ENCODE measurements at regions of chr20 and their contacts with region 1.

Region 1: GRCh38 chr20:10427060-10427692 is 6.8 kb downstream of the MKKS start:
- DNase-seq: peak; percentile 48
- H3K4me3 ChIP-seq: no peak overlapping the region
- H3K4me3 Mint-ChIP-seq: no peak overlapping the region
- H3K27ac Mint-ChIP-seq: no peak overlapping the region
- H3K4me1 ChIP-seq: peaks cover 17% of the 10 kb centered on the region
- H3K4me1 Mint-ChIP-seq: peaks cover 20% of the 10 kb centered on the region
- H3K27me3 ChIP-seq: no peaks in the 10 kb centered on the region
- H3K27me3 Mint-ChIP-seq: no peaks in the 10 kb centered on the region
- CTCF ChIP-seq: peak; percentile 71 to 84

Region 2: GRCh38 chr20:10090588-10091166 is 336.5 kb before region 1 on chr20:
- CTCF ChIA-PET with region 1: no interaction called
- POLR2A ChIA-PET with region 1: no interaction called
- intact Hi-C with region 1: loop called (anchors 5 kb)
- DNase-seq: peak; percentile 48 to 60
- H3K4me3 ChIP-seq: no peak overlapping the region
- H3K4me3 Mint-ChIP-seq: no peak overlapping the region
- H3K27ac Mint-ChIP-seq: no peak overlapping the region
- H3K4me1 ChIP-seq: no peaks in the 10 kb centered on the region
- H3K4me1 Mint-ChIP-seq: no peaks in the 10 kb centered on the region
- H3K27me3 ChIP-seq: no peaks in the 10 kb centered on the region
- H3K27me3 Mint-ChIP-seq: peaks cover 6% of the 10 kb centered on the region
- CTCF ChIP-seq: peak; percentile 70 to 86

Region 3: DNA sequence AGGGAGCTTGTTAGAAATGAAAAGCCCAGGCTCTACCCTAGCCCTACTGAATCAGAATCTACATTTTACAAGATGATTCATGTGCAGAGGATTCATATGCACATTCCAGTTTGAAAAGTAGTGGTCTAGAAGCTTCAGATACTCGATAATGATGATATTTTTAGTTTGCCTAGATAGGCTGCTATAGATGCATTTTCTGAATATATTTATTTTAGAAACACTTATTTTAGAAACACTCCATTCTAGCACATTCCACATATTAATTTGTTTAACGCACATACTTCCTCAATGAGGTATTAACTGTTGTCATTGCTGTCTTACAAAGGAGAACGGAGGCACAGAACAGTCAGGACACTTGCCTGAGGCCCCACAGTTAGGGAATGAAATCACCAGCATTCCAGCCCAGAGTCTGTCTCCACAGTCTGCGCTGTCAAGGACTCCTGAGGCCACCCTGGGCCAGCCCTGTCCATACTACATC is 144.2 kb before region 1 on chr20:
- CTCF ChIA-PET with region 1: no interaction called
- POLR2A ChIA-PET with region 1: no interaction called
- intact Hi-C with region 1: no loop called
- DNase-seq: no peak
- H3K4me3 ChIP-seq: no peak overlapping the region
- H3K4me3 Mint-ChIP-seq: no peak overlapping the region
- H3K27ac Mint-ChIP-seq: no peak overlapping the region
- H3K4me1 ChIP-seq: no peaks in the 10 kb centered on the region
- H3K4me1 Mint-ChIP-seq: no peaks in the 10 kb centered on the region
- H3K27me3 ChIP-seq: no peaks in the 10 kb centered on the region
- H3K27me3 Mint-ChIP-seq: peaks cover 6% of the 10 kb centered on the region
- CTCF ChIP-seq: no peak

Region 4: GRCh38 chr20:10316582-10316981 is 110.6 kb before region 1 on chr20:
- CTCF ChIA-PET with region 1: no interaction called
- POLR2A ChIA-PET with region 1: no interaction called
- intact Hi-C with region 1: loop called (anchors 5 kb)
- DNase-seq: peak in 1 of 2 experiments; percentile 23
- H3K4me3 ChIP-seq: no peak overlapping the region
- H3K4me3 Mint-ChIP-seq: no peak overlapping the region
- H3K27ac Mint-ChIP-seq: no peak overlapping the region
- H3K4me1 ChIP-seq: peaks cover 18% of the 10 kb centered on the region
- H3K4me1 Mint-ChIP-seq: peaks cover 9% of the 10 kb centered on the region
- H3K27me3 ChIP-seq: no peaks in the 10 kb centered on the region
- H3K27me3 Mint-ChIP-seq: no peaks in the 10 kb centered on the region
- CTCF ChIP-seq: peak in 1 of 2 experiments; percentile 7